ENCODE measurements at regions of chr10 and their contacts with region 1.

Region 1: GRCh38 chr10:88131511-88132154 is 268.2 kb downstream of the PTEN start:
- DNase-seq: peak in 1 of 2 experiments; percentile 78
- H3K4me3 ChIP-seq: no peak overlapping the region
- H3K27ac ChIP-seq: no peak overlapping the region
- H3K4me1 ChIP-seq: peaks cover 4% of the 10 kb centered on the region; the same call in 1 of the 2 replicates
- H3K27me3 ChIP-seq: no peaks in the 10 kb centered on the region
- CTCF ChIP-seq: no peak

Region 2: GRCh38 chr10:88042160-88043100 is 89.2 kb before region 1 on chr10:
- CTCF ChIA-PET with region 1: no interaction called
- POLR2A ChIA-PET with region 1: no interaction called
- intact Hi-C with region 1: loop called (anchors 5 kb)
- DNase-seq: peak; percentile 52 to 67
- H3K4me3 ChIP-seq: no peak overlapping the region
- H3K27ac ChIP-seq: no peak overlapping the region
- H3K4me1 ChIP-seq: peaks cover 29% of the 10 kb centered on the region
- H3K27me3 ChIP-seq: no peaks in the 10 kb centered on the region
- CTCF ChIP-seq: no peak

Region 3: DNA sequence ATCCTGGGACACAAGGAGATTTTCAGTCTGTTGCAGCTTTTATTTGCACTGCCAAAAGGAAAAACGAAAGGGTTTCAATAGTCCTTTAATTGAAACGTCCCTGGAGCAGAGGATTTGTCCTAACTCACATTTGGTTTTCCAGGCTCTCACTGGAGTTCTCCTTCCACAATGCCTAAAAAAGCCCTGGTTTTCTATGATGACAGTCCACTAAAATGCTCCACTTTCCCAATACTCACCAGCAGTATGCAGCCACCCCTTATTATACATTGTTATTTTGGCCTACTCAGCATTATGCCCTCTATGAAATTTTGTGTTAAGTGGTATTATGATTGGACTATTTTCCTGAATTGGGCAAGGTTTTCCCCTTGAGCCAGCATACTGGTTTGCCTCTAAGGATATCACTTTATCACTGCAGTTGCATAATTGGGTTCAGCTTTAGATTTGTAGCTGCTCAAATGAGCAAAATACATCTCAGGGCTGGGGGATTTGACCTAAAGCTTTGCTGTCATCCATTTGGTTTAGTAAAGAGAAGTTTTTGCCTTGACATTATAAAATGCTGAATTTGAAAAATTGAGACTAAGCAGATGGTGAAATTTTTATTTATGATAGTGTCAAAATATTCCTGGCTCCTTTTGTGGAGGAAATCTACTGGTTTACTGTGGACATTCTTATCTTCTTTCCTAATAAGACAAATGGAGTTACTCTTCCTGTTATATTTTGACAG is 212.3 kb after region 1 on chr10:
- CTCF ChIA-PET with region 1: no interaction called
- POLR2A ChIA-PET with region 1: no interaction called
- intact Hi-C with region 1: no loop called
- DNase-seq: no peak
- H3K4me3 ChIP-seq: no peak overlapping the region
- H3K27ac ChIP-seq: no peak overlapping the region
- H3K4me1 ChIP-seq: no peaks in the 10 kb centered on the region
- H3K27me3 ChIP-seq: no peaks in the 10 kb centered on the region
- CTCF ChIP-seq: no peak